ENCODE measurements at regions of chr10 and their contacts with region 1.

Region 1: GRCh38 chr10:131943021-131943814 is 38.5 kb downstream of the BNIP3 start:
- DNase-seq: peak; percentile 29 to 66
- H3K4me3 ChIP-seq: no peak overlapping the region
- H3K27ac ChIP-seq: no peak overlapping the region
- H3K4me1 ChIP-seq: no peaks in the 10 kb centered on the region; a peak in 2 of 7 replicates
- H3K27me3 ChIP-seq: no peaks in the 10 kb centered on the region
- CTCF ChIP-seq: peak; percentile 82 to 93 (median 90)
- EP300 ChIP-seq: no peak
- POLR2A ChIP-seq: no peak
- RAD21 ChIP-seq: peak; percentile 70 to 75

Region 2: DNA sequence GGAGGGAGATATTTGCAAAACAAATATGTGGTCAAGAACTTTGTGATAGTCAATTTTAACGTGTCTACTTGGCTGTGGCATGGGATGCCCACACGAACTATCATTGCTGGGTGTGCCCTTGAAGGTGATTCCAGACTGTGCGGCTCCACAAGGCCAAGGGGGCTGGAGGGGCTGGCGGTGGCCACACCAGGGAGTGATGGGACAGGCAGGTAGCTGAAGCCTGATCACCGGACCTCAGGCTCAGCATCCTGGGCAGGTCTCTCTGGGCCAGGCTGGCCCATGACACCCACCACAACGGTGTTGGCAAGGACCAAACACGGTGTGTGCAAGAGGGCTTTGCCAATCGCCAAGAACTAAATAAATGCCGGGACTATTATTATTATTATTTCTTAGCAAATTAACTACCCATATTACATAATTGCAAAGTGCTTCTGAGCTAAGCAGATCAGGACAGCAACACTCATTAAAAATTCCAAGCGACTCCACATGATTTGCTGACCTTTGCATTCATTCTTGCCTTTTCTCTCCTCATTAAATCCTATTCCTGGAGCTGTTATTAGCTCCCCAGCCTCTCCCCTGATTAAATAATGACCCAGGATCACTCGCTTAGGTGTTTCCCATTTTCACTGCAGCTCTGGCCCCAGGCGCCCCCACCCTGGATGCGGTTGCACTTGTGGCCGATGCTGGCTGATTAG is 77.8 kb before region 1 on chr10:
- CTCF ChIA-PET with region 1: no interaction called
- POLR2A ChIA-PET with region 1: no interaction called
- DNase-seq: no peak
- H3K4me3 ChIP-seq: no peak overlapping the region
- H3K27ac ChIP-seq: no peak overlapping the region
- H3K4me1 ChIP-seq: no peaks in the 10 kb centered on the region
- H3K27me3 ChIP-seq: no peaks in the 10 kb centered on the region
- CTCF ChIP-seq: no peak
- EP300 ChIP-seq: no peak
- POLR2A ChIP-seq: no peak
- RAD21 ChIP-seq: no peak

Region 3: GRCh38 chr10:131885391-131886161 is 57.6 kb before region 1 on chr10:
- CTCF ChIA-PET with region 1: interaction called, 41 read pairs
- POLR2A ChIA-PET with region 1: no interaction called
- DNase-seq: peak; percentile 51 to 94
- H3K4me3 ChIP-seq: no peak overlapping the region
- H3K27ac ChIP-seq: no peak overlapping the region
- H3K4me1 ChIP-seq: no peaks in the 10 kb centered on the region
- H3K27me3 ChIP-seq: 0 out of 7 replicates have a peak, but pooled peaks cover 0 to 2% (median 0%) of the 10 kb centered on the region in 4 experiments
- CTCF ChIP-seq: peak; percentile 94 to 98 (median 98)
- EP300 ChIP-seq: no peak
- POLR2A ChIP-seq: no peak
- RAD21 ChIP-seq: peak; percentile 79 to 87

Region 4: GRCh38 chr10:131891196-131891928 is 51.9 kb before region 1 on chr10:
- CTCF ChIA-PET with region 1: interaction called, 41 read pairs
- POLR2A ChIA-PET with region 1: no interaction called
- DNase-seq: peak; percentile 15 to 76
- H3K4me3 ChIP-seq: peak overlapping the region in 1 of 4 experiments; percentile 41; a peak in 2 of 8 replicates
- H3K27ac ChIP-seq: no peak overlapping the region
- H3K4me1 ChIP-seq: peaks cover 0 to 7% (median 4%) of the 10 kb centered on the region in 4 experiments; a peak in 5 of 7 replicates
- H3K27me3 ChIP-seq: peaks cover 0 to 3% (median 0%) of the 10 kb centered on the region in 4 experiments; a peak in 1 of 7 replicates
- CTCF ChIP-seq: peak; percentile 36 to 67 (median 65)
- EP300 ChIP-seq: no peak
- POLR2A ChIP-seq: no peak
- RAD21 ChIP-seq: no peak; a peak in 1 of 4 replicates

Region 5: GRCh38 chr10:131900350-131901146 is 42.7 kb before region 1 on chr10 and contains the start of gene PPP2R2D:
- CTCF ChIA-PET with region 1: interaction called, 13 read pairs
- POLR2A ChIA-PET with region 1: interaction called, 4 read pairs
- DNase-seq: peak; percentile 76 to 96
- H3K4me3 ChIP-seq: peak within 1 kb of the TSS; percentile 72 to 88 (median 82)
- H3K27ac ChIP-seq: peak within 1 kb of the TSS; percentile 91
- H3K4me1 ChIP-seq: peaks cover 0 to 4% (median 2%) of the 10 kb centered on the region in 4 experiments; a peak in 4 of 7 replicates
- H3K27me3 ChIP-seq: peaks cover 0 to 2% (median 0%) of the 10 kb centered on the region in 4 experiments; a peak in 3 of 7 replicates
- CTCF ChIP-seq: no peak
- EP300 ChIP-seq: 0 out of 3 replicates have a peak, but pooled peaks of 1 of the 2 experiments have one; percentile 10
- POLR2A ChIP-seq: peak; percentile 77 to 93
- RAD21 ChIP-seq: no peak
- total RNA-seq, gene PPP2R2D: 32.8 and 34.1 TPM in 2 replicates

Region 6: GRCh38 chr10:131925011-131925649 is 18.1 kb before region 1 on chr10:
- CTCF ChIA-PET with region 1: interaction called, 19 read pairs
- POLR2A ChIA-PET with region 1: no interaction called
- DNase-seq: no peak
- H3K4me3 ChIP-seq: no peak overlapping the region
- H3K27ac ChIP-seq: no peak overlapping the region
- H3K4me1 ChIP-seq: peaks cover 4 to 43% (median 18%) of the 10 kb centered on the region in 4 experiments
- H3K27me3 ChIP-seq: no peaks in the 10 kb centered on the region
- CTCF ChIP-seq: no peak
- EP300 ChIP-seq: no peak
- POLR2A ChIP-seq: no peak
- RAD21 ChIP-seq: no peak

Region 7: DNA sequence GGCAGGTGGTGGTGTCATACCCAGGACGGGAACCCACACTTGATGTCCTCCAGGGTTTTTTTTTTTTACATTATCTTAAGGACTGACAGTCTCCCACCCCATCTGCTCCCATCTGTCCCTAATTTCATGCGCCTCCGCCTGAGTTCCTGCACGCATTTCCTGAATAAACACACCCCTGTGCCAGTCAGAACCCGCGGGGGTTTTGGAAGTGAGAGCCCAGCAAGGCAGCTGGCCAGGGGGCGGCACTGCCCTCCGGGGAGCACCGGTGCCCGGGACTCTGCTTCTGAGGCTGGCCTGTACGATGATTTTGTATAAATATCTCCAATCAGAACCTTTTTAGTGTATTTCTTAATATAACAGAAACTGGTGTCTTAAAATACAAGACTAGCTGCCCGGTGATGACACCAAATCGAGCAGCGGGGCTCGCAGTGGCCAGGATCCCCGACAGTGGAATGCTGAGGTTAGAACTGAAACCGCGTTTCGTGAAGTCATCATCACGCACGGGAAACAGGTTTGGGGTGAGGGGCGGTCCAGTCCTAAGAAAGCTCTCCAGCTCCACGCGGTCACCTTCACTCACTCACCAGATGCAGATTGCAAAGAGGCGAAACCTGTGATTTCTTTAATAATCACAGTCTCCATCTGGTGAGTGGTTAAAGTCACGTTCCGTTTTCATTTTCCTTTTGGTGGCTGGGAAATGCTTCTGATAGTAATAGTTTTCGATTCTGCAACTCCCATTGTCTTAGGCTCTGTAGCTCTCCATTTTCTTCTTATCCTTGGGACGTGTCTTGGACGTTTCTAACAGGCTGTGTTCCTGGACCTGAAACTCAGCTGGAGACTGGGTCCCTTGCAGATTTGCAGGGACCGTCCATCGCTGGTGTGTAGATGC is 18.8 kb after region 1 on chr10:
- CTCF ChIA-PET with region 1: interaction called, 4 read pairs
- POLR2A ChIA-PET with region 1: interaction called, 15 read pairs
- DNase-seq: no peak
- H3K4me3 ChIP-seq: no peak overlapping the region
- H3K27ac ChIP-seq: no peak overlapping the region
- H3K4me1 ChIP-seq: no peaks in the 10 kb centered on the region; a peak in 1 of 7 replicates
- H3K27me3 ChIP-seq: no peaks in the 10 kb centered on the region
- CTCF ChIP-seq: no peak
- EP300 ChIP-seq: no peak
- POLR2A ChIP-seq: no peak
- RAD21 ChIP-seq: no peak

Region 8: DNA sequence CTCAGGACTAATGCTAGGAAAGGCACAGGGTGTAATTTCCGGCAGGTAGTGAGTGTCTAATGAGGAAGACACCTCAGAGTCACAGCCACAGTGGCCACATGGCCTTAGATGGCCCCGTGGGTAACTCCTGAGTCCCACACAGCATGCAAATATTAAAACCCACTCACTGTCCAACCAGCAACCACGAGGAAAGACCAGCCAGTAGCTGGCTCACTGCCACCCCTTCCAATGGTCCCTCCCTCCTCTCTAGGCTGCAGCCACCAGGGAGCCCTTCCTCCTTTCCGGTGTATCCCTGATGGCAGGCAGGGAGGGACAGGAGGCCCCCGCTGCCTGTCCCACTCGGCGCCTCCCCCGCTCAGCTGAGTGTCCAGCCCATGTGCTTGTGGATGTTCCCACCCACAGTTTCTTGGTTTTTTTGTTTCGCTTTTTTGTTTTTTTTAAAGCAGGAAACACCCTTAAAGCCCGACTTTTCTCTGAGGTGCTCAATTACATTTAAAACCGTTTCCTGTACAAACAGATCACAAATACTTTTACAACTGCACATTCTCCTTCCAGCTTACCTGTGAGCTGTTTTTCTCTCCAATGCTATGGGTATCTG is 29.4 kb after region 1 on chr10:
- CTCF ChIA-PET with region 1: interaction called, 22 read pairs
- POLR2A ChIA-PET with region 1: no interaction called
- DNase-seq: no peak
- H3K4me3 ChIP-seq: no peak overlapping the region
- H3K27ac ChIP-seq: no peak overlapping the region
- H3K4me1 ChIP-seq: 0 out of 7 replicates have a peak, but pooled peaks cover 0 to under 1% (median 0%) of the 10 kb centered on the region in 4 experiments
- H3K27me3 ChIP-seq: no peaks in the 10 kb centered on the region; a peak in 1 of 7 replicates
- CTCF ChIP-seq: no peak
- EP300 ChIP-seq: no peak
- POLR2A ChIP-seq: no peak
- RAD21 ChIP-seq: no peak